SK-N-SH (cell line): ENCODE measurements at regions of chr1 and their contacts with region 1.

Region 1: DNA sequence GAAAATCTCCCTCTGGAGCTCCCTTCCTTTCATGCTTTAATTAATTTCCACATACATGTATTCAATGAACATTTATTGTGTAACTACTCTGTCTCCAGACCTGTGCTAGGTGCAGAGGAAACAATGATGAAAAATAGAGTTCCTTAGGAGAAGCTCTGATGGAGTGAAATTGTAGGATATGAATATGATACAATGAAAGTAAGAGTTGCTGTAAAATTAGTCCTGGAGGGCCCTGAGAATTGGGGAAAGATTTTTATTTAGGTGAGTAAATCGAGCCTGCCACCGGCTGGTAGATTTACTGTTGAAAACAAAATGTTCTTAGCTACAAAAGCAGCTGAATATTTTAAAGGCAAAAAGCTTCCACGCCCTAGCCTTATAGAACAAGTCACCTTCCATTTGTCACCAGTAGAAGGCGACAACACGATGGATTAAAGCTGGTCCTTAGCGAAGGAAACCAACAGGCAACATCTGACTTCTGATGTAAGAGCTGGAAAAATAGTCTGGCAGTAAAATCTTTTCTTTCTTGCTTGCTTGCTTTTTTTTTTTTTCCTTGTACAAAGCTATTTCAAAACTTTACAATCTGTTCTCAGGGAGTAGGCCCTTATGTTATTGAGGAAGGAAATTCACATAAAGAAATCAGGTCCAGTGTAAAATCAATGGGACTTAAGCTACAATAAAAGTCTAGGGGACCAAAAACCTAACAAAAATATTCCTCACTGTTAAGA is 82.0 kb upstream of the ROR1 start:
- DNase-seq: peak; percentile 70
- H3K4me3 ChIP-seq: no peak overlapping the region
- H3K27ac ChIP-seq: peak overlapping the region in 1 of 2 experiments; percentile 58; a peak in 2 of 4 replicates
- H3K4me1 ChIP-seq: no peaks in the 10 kb centered on the region; a peak in 1 of 4 replicates
- H3K27me3 ChIP-seq: no peaks in the 10 kb centered on the region; the same call in 1 of the 2 replicates
- CTCF ChIP-seq: peak; percentile 87
- EP300 ChIP-seq: no peak; a peak in 1 of 4 replicates
- RAD21 ChIP-seq: peak; percentile 95

Region 2: DNA sequence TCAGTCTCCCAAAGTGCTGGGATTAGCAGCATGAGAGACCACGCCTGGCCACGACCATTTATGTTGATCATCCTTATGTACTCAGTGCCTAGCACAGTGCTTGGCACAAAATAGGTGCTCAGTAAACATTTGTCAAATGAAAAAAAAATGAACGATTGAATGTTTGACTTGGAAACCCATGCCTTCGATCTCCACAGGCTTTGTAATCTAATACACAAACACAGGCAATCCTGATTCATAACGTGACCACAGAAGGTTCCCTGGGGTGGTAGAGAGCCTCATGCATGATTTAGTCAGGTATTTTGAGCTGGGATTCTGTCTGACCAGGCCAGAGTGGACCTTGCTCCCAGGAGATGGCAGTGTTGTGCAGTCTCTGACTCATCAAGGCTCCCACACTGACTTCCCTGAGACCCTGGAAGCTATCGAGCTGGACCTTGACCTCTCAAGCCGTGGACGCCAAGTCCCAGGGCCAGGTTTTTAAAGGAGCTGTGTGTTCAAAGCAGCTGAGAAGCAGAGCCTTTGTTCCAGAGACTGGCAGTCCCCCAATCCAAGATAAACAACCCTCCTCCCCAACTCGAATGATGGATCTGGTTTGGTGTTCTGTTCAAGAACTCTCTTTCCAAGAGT is 17.5 kb before region 1 on chr1:
- CTCF ChIA-PET with region 1: interaction called, 42 read pairs
- POLR2A ChIA-PET with region 1: no interaction called
- DNase-seq: peak; percentile 72
- H3K4me3 ChIP-seq: peak overlapping the region in 1 of 2 experiments; percentile 6; a peak in 1 of 4 replicates
- H3K27ac ChIP-seq: peak overlapping the region in 1 of 2 experiments; percentile 76; a peak in 2 of 4 replicates
- H3K4me1 ChIP-seq: peaks cover 0 to 17% of the 10 kb centered on the region in 2 experiments; a peak in 2 of 4 replicates
- H3K27me3 ChIP-seq: no peaks in the 10 kb centered on the region
- CTCF ChIP-seq: peak; percentile 77
- EP300 ChIP-seq: no peak
- RAD21 ChIP-seq: peak; percentile 89

Region 3: DNA sequence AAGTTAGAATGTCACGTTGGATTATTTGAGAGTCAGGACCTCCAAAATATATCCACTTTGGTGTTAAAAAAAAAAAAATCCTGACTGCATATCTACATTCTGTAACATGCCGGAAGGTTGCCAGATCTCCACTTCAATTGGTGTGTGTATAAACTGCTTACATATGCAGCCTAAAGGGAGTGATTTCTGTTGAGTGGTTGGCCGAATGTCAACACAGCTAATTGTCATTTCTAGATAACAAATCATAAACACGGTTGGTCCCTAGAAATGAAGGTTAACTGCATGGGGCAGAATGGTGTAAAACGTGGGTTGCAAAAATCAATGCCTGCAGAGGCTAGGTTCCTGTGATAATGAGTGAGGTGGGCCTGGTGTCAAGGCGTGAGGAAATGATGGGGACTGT is 66.9 kb after region 1 on chr1:
- CTCF ChIA-PET with region 1: interaction called, 20 read pairs
- POLR2A ChIA-PET with region 1: interaction called, 4 read pairs
- DNase-seq: peak; percentile 27
- H3K4me3 ChIP-seq: no peak overlapping the region
- H3K27ac ChIP-seq: peak overlapping the region in 1 of 2 experiments; percentile 72; a peak in 2 of 4 replicates
- H3K4me1 ChIP-seq: peaks cover 0 to 13% of the 10 kb centered on the region in 2 experiments; a peak in 2 of 4 replicates
- H3K27me3 ChIP-seq: no peaks in the 10 kb centered on the region
- CTCF ChIP-seq: no peak
- EP300 ChIP-seq: 0 out of 4 replicates have a peak, but pooled peaks of 1 of the 2 experiments have one; percentile 17
- RAD21 ChIP-seq: no peak

Region 4: DNA sequence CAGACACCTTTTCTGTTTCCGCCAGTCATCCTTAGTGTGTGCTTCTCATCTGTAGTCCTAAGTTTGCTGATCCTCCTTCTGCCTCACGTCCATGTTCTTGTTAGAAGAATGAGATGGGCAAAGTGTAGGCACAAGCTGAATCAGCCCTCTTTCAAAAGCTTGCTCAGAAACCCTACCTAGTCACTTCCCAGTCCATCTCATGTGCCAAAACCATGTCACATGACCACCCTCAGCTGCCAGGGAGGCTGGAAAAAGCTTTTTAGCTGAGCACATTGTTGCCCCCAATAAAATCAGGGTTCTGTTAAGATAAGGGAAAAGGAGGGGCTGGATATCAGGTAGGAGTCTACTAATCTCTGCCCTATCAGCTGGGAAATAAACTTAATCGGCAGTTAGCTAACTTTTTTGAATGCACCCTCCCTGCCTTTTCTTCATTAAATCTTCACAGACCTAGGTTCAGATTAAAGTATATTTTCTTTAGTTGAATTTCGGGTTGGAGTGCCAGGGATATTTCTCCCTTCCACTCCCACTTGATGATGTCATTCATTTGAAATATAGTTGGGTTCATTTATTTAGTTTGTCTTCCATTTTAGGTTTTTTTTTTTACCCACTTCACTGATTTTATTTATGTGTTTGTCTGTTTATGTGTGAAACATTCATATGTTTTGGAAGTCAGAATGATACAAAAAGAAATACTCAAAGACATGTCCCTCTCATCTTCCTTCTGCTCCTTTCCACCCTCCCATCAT is 211.2 kb after region 1 on chr1:
- CTCF ChIA-PET with region 1: interaction called, 11 read pairs
- POLR2A ChIA-PET with region 1: no interaction called
- DNase-seq: no peak
- H3K4me3 ChIP-seq: no peak overlapping the region
- H3K27ac ChIP-seq: no peak overlapping the region
- H3K4me1 ChIP-seq: peaks cover 0 to 13% of the 10 kb centered on the region in 2 experiments; a peak in 2 of 4 replicates
- H3K27me3 ChIP-seq: no peaks in the 10 kb centered on the region
- CTCF ChIP-seq: no peak
- EP300 ChIP-seq: no peak
- RAD21 ChIP-seq: no peak

Region 5: GRCh38 chr1:63920154-63921117 is 228.6 kb after region 1 on chr1:
- CTCF ChIA-PET with region 1: interaction called, 22 read pairs
- POLR2A ChIA-PET with region 1: no interaction called
- DNase-seq: no peak
- H3K4me3 ChIP-seq: no peak overlapping the region
- H3K27ac ChIP-seq: peak overlapping the region; percentile 54 to 87
- H3K4me1 ChIP-seq: peaks cover 4 to 27% of the 10 kb centered on the region in 2 experiments; a peak in 3 of 4 replicates
- H3K27me3 ChIP-seq: no peaks in the 10 kb centered on the region
- CTCF ChIP-seq: peak; percentile 61
- EP300 ChIP-seq: peak; percentile 77 to 99
- RAD21 ChIP-seq: peak; percentile 31; the same call in 1 of the 2 replicates

Region 6: GRCh38 chr1:64136752-64137411 is 445.0 kb after region 1 on chr1:
- CTCF ChIA-PET with region 1: interaction called, 59 read pairs
- POLR2A ChIA-PET with region 1: interaction called, 3 read pairs
- DNase-seq: peak; percentile 57
- H3K4me3 ChIP-seq: peak overlapping the region in 1 of 2 experiments; percentile 16; a peak in 1 of 4 replicates
- H3K27ac ChIP-seq: peak overlapping the region; percentile 43 to 61; a peak in 3 of 4 replicates
- H3K4me1 ChIP-seq: peaks cover 13 to 24% of the 10 kb centered on the region in 2 experiments
- H3K27me3 ChIP-seq: no peaks in the 10 kb centered on the region
- CTCF ChIP-seq: peak; percentile 97
- EP300 ChIP-seq: no peak
- RAD21 ChIP-seq: peak; percentile 95